ENCODE measurements at regions of chr5 and their contacts with region 1.

Region 1: DNA sequence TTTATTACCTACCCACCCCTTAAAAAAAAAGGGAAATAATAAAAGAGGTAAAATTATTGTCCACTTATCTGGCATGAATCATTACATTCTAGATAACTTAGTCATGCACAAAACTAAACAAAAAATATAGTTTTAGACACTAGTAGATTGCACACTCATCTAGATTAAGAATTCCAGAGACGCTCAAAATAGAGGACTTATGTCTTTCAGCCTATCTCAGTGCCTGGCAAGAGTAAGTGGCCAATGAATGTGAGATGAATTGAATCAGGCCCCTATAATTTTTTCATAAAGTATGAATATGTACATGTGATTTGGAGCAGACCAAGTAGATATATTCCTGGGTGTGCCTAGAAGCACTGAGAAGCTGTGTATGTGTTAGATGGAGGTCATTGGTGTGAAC is 2.0 kb upstream of the RXFP3 start:
- DNase-seq: no peak
- ATAC-seq: no peak

Region 2: DNA sequence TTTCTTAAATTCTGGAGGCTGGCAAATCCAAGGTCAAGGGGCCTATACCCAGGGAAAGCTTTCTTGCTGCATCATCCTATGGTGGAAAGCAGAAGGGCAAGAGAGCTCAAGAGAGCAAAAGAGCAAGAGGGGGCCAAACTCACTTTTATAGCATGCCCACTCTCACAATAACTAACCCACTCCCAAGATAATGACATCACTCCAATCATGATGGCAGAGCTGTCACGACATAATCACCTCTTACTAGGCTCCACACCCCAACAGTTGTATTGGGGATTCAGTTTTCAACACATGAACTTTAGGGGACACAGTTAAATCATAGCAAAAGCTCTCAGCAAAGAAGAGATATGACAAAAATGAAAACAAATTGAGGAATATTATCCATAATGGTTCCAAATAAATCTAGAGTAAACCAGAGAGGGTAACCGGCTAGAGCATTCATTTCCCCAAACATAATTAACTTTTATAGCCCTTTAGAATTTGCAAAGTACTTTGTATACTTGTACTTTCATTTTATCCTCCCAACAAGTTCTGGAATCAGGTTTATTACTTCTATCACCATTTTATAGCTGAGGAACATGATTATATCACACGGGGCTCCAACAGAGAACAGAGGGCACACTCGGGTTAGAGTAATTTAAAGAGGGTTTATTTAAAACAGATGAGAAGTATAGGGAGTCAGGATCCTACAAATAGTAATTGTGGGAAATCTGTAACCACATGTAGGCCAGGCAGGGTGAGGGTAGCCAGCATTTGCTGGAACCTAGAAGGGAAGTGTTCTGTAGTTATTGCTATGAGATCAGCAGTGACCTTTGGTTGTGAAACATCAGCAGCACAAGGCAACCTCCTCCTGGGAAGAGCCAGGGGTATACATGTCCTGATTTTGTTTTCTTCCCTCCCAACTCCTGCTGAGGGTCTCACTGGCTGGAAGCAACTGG is 500.6 kb before region 1 on chr5:
- intact Hi-C with region 1: loop called (anchors 5 kb)
- DNase-seq: no peak
- ATAC-seq: no peak

Region 3: GRCh38 chr5:33997331-33997983 is 63.3 kb after region 1 on chr5:
- intact Hi-C with region 1: no loop called
- DNase-seq: peak; percentile 52
- ATAC-seq: peak; percentile 93

Region 4: GRCh38 chr5:34053133-34053532 is 119.0 kb after region 1 on chr5:
- intact Hi-C with region 1: no loop called
- DNase-seq: no peak
- ATAC-seq: no peak